Lower leg skin (tissue), 4 donors: ENCODE measurements at regions of chr18 and their contacts with region 1.

Region 1: GRCh38 chr18:36031407-36031806 is 36.0 kb downstream of the RPRD1A start:
- DNase-seq: no peak
- H3K4me3 ChIP-seq: no peak overlapping the region
- CTCF ChIP-seq: no peak
- POLR2A ChIP-seq: no peak

Region 2: GRCh38 chr18:36279001-36279400 is 247.6 kb after region 1 on chr18:
- intact Hi-C with region 1: loop called (anchors 5 kb)
- DNase-seq: peak in 1 of 2 donors; percentile 32
- H3K4me3 ChIP-seq: no peak overlapping the region
- CTCF ChIP-seq: no peak
- POLR2A ChIP-seq: no peak

Region 3: DNA sequence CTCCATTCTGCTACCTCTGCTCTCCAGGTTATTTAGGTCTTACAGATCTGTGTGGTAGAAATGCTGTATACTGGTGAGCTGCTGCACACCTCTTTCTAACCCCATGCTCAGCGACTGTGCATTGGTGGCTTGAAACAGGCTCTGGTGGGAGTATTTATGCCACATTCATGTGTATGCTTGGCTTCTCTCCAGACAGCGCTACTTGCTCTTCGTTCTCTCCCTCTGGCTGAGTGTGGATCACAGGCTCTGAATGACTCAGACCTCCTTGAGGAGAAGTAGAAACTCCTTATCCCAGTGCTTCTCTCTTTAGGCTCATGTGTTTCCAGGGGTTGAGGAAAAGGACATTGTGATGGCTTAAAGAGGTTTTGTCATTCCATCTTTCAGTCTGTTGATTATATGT is 321.0 kb after region 1 on chr18:
- intact Hi-C with region 1: no loop called
- DNase-seq: no peak
- H3K4me3 ChIP-seq: no peak overlapping the region
- CTCF ChIP-seq: no peak
- POLR2A ChIP-seq: no peak

Region 4: DNA sequence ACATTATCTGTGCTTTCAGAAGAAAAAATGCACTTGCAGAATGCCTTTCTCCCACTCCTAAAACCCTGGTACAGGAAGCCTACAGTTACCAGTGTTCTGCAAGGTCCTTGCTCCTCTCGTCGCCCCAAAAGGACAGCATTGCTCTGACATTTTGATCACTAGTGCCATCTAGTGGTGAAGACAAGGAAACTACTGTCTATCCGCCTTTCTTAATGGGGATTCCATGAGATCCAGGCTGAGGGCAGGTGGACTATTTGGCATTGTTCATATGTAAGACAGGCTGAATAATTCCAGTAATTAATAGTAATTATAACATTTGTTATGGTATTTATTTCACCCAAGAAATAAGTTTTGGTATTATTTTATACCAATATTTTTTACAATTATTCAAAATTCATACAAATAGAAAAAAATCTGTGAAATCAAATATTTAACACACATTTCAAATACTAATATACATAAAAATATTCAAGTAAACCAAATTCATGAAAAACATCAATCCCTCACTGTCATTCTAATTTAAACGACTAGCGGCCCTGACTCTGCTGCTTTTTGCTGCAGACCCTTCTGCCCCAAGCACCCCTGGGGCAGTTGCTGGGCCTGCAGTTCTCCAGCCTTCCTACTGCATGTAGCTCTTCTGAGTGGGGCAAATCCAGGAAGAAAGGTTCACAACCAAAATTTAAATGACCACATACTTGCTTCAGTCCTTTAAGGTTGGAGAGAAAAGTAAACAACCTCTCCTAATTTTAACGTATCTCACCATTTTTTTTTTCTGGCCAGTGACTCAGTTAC is 778.4 kb after region 1 on chr18:
- intact Hi-C with region 1: loop called (anchors 5 kb)
- DNase-seq: peak in 1 of 2 donors; percentile 21
- H3K4me3 ChIP-seq: no peak overlapping the region
- CTCF ChIP-seq: peak in 1 of 3 donors; percentile 39
- POLR2A ChIP-seq: no peak